Activated naive CD4-positive, alpha-beta T cell treated with anti-CD3 and anti-CD28 coated beads for 36 hours (primary cell): ENCODE measurements at regions of chr4 and their contacts with region 1.

Region 1: GRCh38 chr4:151887031-151887815 is 126.4 kb upstream of the GATB start:
- DNase-seq: peak; percentile 14
- H3K4me3 Mint-ChIP-seq: no peak overlapping the region
- H3K27ac Mint-ChIP-seq: peak overlapping the region; percentile 28
- H3K4me1 Mint-ChIP-seq: peaks cover 21% of the 10 kb centered on the region
- H3K27me3 Mint-ChIP-seq: no peaks in the 10 kb centered on the region

Region 2: DNA sequence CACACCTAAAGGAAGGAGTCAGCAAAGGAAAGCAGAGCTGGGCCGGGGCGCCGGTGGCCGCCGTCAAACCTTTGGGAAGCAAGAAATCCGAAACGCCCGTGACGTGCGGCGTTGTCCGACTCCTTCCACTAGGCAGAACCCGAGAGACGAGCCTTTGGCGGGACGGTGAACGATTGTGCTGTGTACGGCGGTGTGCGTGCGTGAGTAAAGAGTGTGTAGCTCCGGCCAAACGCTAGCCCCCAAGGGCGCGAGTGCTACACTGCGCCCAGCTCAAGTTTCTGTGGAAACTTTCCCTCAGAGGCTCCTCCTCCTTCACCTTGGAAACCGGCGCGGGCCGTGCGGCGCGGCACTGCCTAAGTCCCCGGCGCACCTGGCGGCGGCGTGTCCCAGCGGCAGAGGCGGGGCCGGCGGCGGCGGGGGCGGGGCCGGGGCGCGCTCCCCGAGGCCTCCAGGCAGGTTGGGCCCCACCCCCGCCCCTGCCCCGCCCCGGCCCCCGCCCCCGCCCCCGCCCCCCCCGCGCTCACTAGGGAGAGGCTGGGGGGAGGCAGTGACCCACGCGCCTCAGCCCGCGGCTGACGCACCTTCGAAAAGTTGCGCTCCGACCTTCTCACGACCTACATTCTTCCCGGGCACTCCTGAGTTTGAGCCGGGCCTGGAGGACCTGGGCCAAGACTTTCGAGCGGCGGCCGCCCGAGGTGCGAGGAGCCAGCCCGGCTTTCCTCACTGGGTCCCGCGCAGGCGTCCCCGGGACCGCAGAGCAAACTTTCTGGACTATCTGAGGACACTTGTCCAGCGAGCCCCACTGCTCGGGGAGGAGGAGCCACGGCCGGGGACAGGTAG is 478.4 kb before region 1 on chr4 and contains the start of gene FHIP1A:
- CTCF ChIA-PET with region 1: interaction called, 4 read pairs
- intact Hi-C with region 1: loop called (anchors 5 kb)
- DNase-seq: peak; percentile 89
- H3K4me3 Mint-ChIP-seq: peak within 1 kb of the TSS; percentile 88
- H3K27ac Mint-ChIP-seq: peak within 1 kb of the TSS; percentile 60
- H3K4me1 Mint-ChIP-seq: peaks cover 22% of the 10 kb centered on the region
- H3K27me3 Mint-ChIP-seq: peaks cover 17% of the 10 kb centered on the region
- total RNA-seq, gene FHIP1A: 0.07 to 0.17 TPM

Region 3: GRCh38 chr4:151833174-151833573 is 54.0 kb before region 1 on chr4:
- CTCF ChIA-PET with region 1: no interaction called
- intact Hi-C with region 1: loop called (anchors 1 kb)
- DNase-seq: no peak
- H3K4me3 Mint-ChIP-seq: no peak overlapping the region
- H3K27ac Mint-ChIP-seq: no peak overlapping the region
- H3K4me1 Mint-ChIP-seq: peaks cover 27% of the 10 kb centered on the region
- H3K27me3 Mint-ChIP-seq: no peaks in the 10 kb centered on the region

Region 4: GRCh38 chr4:152014280-152014679 is 127.1 kb after region 1 on chr4:
- CTCF ChIA-PET with region 1: no interaction called
- intact Hi-C with region 1: loop called (anchors 2 kb)
- DNase-seq: peak; percentile 81
- H3K4me3 Mint-ChIP-seq: no peak overlapping the region
- H3K27ac Mint-ChIP-seq: no peak overlapping the region
- H3K4me1 Mint-ChIP-seq: peaks cover 49% of the 10 kb centered on the region
- H3K27me3 Mint-ChIP-seq: no peaks in the 10 kb centered on the region

Region 5: DNA sequence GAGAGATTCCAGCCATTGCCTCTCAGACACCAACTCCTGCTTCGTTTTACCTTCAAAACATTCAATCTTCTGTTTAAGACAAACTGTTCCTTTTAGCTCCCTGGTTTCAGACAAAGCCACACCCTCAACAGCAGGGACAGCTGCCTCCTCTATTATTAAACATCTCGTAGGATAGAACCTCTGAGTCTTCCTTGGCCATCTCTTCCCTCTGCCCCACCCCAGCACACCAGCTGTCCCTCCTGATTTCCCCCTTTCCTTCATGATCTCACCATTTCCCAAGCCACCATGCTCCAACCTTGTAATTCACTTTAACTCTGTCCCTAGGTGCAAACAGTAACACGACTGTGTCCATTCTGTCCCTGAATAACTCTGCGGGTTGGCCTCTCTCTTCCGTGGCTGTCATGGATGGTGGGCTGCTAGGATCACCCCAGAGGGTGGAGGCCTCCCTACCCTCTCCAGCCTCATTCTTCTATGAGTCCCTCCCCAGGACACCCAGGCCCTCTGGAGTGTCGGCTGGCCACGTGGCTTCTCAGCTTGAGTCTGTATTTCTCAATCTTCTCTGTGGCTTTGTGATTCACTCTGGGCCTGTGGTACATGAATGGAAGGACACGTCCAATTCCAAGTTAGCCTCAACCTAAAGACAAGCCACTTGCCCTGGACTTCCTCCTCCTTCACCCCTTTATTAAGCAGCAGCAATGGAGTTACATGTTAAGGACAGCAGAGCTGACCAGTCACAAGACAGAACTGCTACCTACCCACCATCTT is 298.7 kb after region 1 on chr4:
- CTCF ChIA-PET with region 1: no interaction called
- intact Hi-C with region 1: loop called (anchors 2 kb)
- DNase-seq: no peak
- H3K4me3 Mint-ChIP-seq: no peak overlapping the region
- H3K27ac Mint-ChIP-seq: no peak overlapping the region
- H3K4me1 Mint-ChIP-seq: peaks cover 38% of the 10 kb centered on the region
- H3K27me3 Mint-ChIP-seq: no peaks in the 10 kb centered on the region

Region 6: DNA sequence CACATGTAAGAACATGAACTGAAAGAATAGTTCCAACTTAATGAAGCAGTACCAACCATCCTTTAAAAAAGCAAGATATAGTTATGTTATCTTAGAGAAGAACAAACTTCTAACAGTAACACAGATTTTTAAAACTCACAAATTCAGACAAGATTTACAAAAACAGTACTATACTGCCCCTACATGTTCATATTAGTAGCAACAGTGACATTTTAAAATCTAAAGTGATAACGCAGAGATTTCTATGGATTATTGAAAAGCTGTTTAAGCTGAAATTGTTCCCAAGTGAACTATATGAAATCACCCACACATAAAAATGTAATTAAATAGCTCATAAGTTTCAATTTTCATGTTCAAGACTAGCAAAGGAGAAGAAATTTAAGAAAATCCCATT is 482.7 kb after region 1 on chr4:
- CTCF ChIA-PET with region 1: no interaction called
- intact Hi-C with region 1: loop called (anchors 5 kb)
- DNase-seq: no peak
- H3K4me3 Mint-ChIP-seq: no peak overlapping the region
- H3K27ac Mint-ChIP-seq: no peak overlapping the region
- H3K4me1 Mint-ChIP-seq: peaks cover 22% of the 10 kb centered on the region
- H3K27me3 Mint-ChIP-seq: no peaks in the 10 kb centered on the region